Dendritic cell treated with granulocyte-macrophage colony-stimulating factor and Interleukin-4, amounts not matched to agents 40 ng/mL and 50 ng/mL, for 4 days (primary cell): ENCODE measurements at regions of chr11 and their contacts with region 1.

Region 1: GRCh38 chr11:10857709-10858438 is at the start of gene ZBED5:
- H3K4me3 Mint-ChIP-seq: peak within 1 kb of the TSS; percentile 98
- H3K27ac Mint-ChIP-seq: peak within 1 kb of the TSS; percentile 97
- H3K4me1 Mint-ChIP-seq: peaks cover 29% of the 10 kb centered on the region
- H3K27me3 Mint-ChIP-seq: no peaks in the 10 kb centered on the region

Region 2: DNA sequence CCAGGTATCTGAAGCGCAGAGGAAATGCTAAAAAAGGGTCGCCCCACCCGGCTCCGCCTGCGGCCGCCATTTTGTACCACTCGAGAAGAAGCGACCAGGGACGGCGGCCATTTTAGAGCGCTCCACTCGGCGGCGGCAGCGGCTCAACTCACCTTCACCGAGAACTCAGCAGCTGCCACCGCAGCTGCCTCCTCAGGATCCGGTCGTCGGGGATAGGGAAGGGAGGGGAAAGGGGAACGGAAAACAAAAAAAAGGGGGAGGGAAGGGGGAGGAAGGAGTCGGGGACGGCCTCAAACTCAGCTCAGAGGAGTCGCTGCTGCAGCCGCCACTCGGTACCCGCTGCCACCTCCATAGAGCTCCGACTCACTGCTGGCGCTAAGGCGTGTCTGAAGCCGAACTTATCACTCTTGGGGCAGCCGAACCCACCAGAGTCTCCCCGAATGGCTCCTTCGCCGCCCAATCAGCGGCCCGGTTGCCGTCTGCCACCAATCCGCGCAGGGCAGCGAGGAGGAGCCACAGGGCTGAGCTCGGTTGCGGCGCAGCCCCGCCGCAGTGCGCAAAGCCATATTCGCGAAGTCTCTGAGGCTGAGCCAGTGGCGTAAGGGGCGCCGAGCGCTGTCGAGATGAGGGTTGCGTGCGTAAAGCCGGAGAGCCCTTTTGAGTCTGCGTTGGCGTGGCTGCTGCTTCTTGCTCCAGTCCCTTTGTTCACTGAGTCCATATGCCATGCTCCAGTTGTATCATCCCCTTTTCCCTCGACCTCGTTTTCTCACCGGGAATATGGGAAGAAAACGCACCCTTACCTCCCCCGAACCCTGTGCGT is 49.1 kb before region 1 on chr11 and contains the start of gene EIF4G2:
- intact Hi-C with region 1: loop called (anchors 2 kb)
- H3K4me3 Mint-ChIP-seq: peak within 1 kb of the TSS; percentile 92
- H3K27ac Mint-ChIP-seq: peak within 1 kb of the TSS; percentile 99
- H3K4me1 Mint-ChIP-seq: peaks cover 38% of the 10 kb centered on the region
- H3K27me3 Mint-ChIP-seq: peaks cover 3% of the 10 kb centered on the region

Region 3: DNA sequence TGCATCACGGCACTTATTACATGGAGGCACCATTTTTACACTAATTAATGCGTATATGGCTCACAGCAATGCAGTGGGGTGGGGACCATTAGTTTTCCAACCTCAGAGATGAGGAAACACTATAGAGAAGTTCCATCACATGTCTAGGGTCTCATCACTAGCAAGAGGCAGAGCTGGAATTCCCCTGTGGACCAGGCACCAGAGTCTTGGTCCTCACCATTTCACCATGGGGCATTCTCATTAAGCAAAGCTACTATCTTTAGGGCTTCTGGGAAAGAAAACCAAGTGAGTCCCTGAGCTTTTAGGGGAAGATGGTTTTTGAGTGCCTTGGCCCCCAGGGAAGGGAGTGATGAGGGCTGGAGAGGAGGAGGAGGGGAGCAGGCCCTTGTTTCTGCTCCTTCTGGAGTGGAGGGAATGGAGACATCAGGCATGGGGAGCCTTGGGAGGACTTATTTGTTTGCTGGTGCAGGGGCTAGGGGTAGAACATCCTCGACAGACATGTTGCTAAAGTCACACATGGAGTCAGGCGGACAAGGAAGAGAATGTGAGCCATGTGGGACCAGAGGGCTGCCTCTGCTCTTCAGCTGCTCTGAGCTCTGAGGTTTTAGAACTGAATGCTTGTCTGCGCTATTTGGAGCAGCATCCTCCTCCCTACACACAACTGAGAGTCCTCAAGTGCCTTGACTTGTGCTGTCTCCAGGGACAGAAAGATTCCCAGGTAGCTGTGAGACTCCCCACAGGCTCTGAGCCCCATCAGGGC is 40.3 kb after region 1 on chr11:
- intact Hi-C with region 1: loop called (anchors 1 kb)
- H3K4me3 Mint-ChIP-seq: peak overlapping the region; percentile 56
- H3K27ac Mint-ChIP-seq: peak overlapping the region; percentile 93
- H3K4me1 Mint-ChIP-seq: peaks cover 64% of the 10 kb centered on the region
- H3K27me3 Mint-ChIP-seq: no peaks in the 10 kb centered on the region